ENCODE measurements at regions of chr10 and their contacts with region 1.

Region 1: GRCh38 chr10:110843031-110843430 is 28.7 kb upstream of the PDCD4 start:
- DNase-seq: peak; percentile 95
- ATAC-seq: peak; percentile 67
- H3K4me3 ChIP-seq: peak overlapping the region in 4 of 5 experiments; percentile 1 to 50 (median 26)
- H3K4me3 Mint-ChIP-seq: peak overlapping the region; percentile 69
- H3K27ac ChIP-seq: peak overlapping the region; percentile 94 to 99
- H3K27ac Mint-ChIP-seq: peak overlapping the region; percentile 89
- H3K4me1 ChIP-seq: peaks cover 66 to 76% of the 10 kb centered on the region in 2 donors
- H3K4me1 Mint-ChIP-seq: peaks cover 72% of the 10 kb centered on the region
- H3K27me3 ChIP-seq: no peaks in the 10 kb centered on the region
- H3K27me3 Mint-ChIP-seq: no peaks in the 10 kb centered on the region
- CTCF ChIP-seq: no peak

Region 2: DNA sequence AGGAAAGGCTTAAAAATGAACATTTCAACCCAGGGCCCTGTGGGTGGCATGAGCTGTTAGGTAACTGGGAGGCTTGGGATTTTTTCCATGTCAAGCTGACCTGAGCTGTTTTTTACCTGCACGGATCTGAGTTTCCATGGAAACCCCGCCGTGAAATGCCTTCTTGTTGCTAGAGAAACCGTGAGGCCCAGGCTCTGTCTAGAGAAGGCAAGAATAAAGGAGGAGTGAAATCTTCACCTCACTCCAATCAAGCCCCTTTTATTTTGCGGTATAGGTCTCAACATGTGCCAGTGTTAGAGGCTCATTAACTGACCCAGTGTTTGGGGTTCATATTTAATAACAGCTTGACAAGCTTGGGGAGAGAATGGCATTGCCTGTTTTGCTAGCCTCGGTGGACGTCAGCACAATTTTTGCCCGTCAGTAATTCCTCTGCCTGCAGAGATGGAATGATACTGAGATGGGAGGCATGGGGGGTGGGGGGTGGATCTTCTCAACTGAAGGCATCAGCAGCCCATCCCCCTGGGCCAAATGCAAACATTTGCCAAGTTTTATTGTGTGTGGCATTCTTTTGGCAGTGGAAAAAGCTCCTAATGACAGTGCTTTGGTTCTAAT is 20.2 kb before region 1 on chr10:
- CTCF ChIA-PET with region 1: interaction called, 6 read pairs
- POLR2A ChIA-PET with region 1: interaction called, 10 read pairs
- intact Hi-C with region 1: loop called (anchors 2 kb)
- DNase-seq: no peak
- ATAC-seq: no peak
- H3K4me3 ChIP-seq: no peak overlapping the region
- H3K4me3 Mint-ChIP-seq: no peak overlapping the region
- H3K27ac ChIP-seq: no peak overlapping the region
- H3K27ac Mint-ChIP-seq: no peak overlapping the region
- H3K4me1 ChIP-seq: peaks cover 12 to 13% of the 10 kb centered on the region in 2 donors
- H3K4me1 Mint-ChIP-seq: peaks cover 26% of the 10 kb centered on the region
- H3K27me3 ChIP-seq: no peaks in the 10 kb centered on the region
- H3K27me3 Mint-ChIP-seq: no peaks in the 10 kb centered on the region
- CTCF ChIP-seq: no peak

Region 3: DNA sequence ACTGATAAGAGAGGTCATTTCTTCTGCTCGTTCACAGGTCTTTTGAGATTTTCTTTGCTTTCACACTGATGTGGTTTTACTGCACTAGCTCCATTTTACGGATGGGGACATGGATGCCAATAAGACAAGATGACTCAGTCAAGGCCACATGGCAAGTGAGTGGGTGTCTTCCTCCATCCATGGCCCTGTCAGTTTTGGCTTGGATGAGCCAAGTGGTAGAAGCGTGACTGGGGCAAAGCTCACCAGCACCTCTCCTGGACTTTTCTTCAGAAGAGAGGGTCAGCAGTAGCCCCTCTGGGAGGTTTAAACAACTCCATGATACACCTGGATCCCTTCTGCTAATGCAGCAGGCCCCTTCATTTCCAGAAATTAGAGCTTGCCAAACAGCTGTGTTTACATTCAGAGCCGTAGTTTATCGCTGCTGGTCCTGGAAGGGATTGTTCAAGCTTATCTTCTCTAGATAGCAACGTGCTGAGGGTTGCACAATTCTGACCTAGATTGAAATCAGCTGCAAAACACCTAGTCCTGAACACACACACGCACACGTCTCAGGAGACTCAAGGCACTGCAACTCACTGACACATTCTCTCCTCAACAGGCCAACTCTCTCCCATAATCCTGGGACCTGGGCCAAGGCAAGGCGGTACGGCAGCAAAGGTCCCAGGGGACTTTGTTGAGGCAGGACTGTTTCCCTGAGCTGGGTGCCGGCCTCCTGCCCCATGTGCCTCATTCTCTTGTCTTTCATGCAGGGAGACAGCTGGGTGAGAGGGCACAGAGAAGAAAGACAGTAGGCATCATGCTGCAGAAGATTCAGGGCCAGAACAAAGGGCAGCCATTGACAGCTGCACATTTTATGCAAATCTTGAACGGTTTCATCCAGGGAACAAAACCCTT is 14.5 kb after region 1 on chr10:
- CTCF ChIA-PET with region 1: interaction called, 9 read pairs
- POLR2A ChIA-PET with region 1: interaction called, 14 read pairs
- intact Hi-C with region 1: loop called (anchors 1 kb)
- DNase-seq: no peak
- ATAC-seq: peak; percentile 26
- H3K4me3 ChIP-seq: no peak overlapping the region
- H3K4me3 Mint-ChIP-seq: peak overlapping the region; percentile 20
- H3K27ac ChIP-seq: peak overlapping the region in 1 of 2 donors; percentile 39
- H3K27ac Mint-ChIP-seq: peak overlapping the region; percentile 33
- H3K4me1 ChIP-seq: peaks cover 61% of the 10 kb centered on the region in 2 donors
- H3K4me1 Mint-ChIP-seq: peaks cover 64% of the 10 kb centered on the region
- H3K27me3 ChIP-seq: no peaks in the 10 kb centered on the region
- H3K27me3 Mint-ChIP-seq: no peaks in the 10 kb centered on the region
- CTCF ChIP-seq: no peak

Region 4: GRCh38 chr10:110864662-110865140 is 21.7 kb after region 1 on chr10:
- CTCF ChIA-PET with region 1: interaction called, 43 read pairs
- POLR2A ChIA-PET with region 1: interaction called, 80 read pairs
- intact Hi-C with region 1: loop called (anchors 1 kb)
- DNase-seq: peak; percentile 89
- ATAC-seq: peak; percentile 55
- H3K4me3 ChIP-seq: peak overlapping the region in 4 of 5 experiments; percentile 21 to 60 (median 38)
- H3K4me3 Mint-ChIP-seq: peak overlapping the region; percentile 85
- H3K27ac ChIP-seq: peak overlapping the region; percentile 94 to 96
- H3K27ac Mint-ChIP-seq: peak overlapping the region; percentile 97
- H3K4me1 ChIP-seq: peaks cover 97 to 100% of the 10 kb centered on the region in 2 donors
- H3K4me1 Mint-ChIP-seq: peaks cover 97% of the 10 kb centered on the region
- H3K27me3 ChIP-seq: no peaks in the 10 kb centered on the region
- H3K27me3 Mint-ChIP-seq: no peaks in the 10 kb centered on the region
- CTCF ChIP-seq: no peak

Region 5: GRCh38 chr10:110871298-110872084 is 28.5 kb after region 1 on chr10 and contains the start of gene PDCD4:
- CTCF ChIA-PET with region 1: interaction called, 43 read pairs
- POLR2A ChIA-PET with region 1: interaction called, 80 read pairs
- intact Hi-C with region 1: loop called (anchors 1 kb)
- DNase-seq: peak; percentile 92
- ATAC-seq: peak; percentile 74
- H3K4me3 ChIP-seq: peak within 1 kb of the TSS; percentile 82 to 94 (median 85)
- H3K4me3 Mint-ChIP-seq: peak within 1 kb of the TSS; percentile 91
- H3K27ac ChIP-seq: peak within 1 kb of the TSS; percentile 89 to 94
- H3K27ac Mint-ChIP-seq: peak within 1 kb of the TSS; percentile 96
- H3K4me1 ChIP-seq: peaks cover 61% of the 10 kb centered on the region in 2 donors
- H3K4me1 Mint-ChIP-seq: peaks cover 60% of the 10 kb centered on the region
- H3K27me3 ChIP-seq: no peaks in the 10 kb centered on the region
- H3K27me3 Mint-ChIP-seq: no peaks in the 10 kb centered on the region
- CTCF ChIP-seq: no peak
- total RNA-seq, gene PDCD4: 169 and 185 TPM in 2 replicates

Measured in B cell (primary cell).